AG04449 (cell line): ENCODE measurements at regions of chr9 and their contacts with region 1.

Region 1: DNA sequence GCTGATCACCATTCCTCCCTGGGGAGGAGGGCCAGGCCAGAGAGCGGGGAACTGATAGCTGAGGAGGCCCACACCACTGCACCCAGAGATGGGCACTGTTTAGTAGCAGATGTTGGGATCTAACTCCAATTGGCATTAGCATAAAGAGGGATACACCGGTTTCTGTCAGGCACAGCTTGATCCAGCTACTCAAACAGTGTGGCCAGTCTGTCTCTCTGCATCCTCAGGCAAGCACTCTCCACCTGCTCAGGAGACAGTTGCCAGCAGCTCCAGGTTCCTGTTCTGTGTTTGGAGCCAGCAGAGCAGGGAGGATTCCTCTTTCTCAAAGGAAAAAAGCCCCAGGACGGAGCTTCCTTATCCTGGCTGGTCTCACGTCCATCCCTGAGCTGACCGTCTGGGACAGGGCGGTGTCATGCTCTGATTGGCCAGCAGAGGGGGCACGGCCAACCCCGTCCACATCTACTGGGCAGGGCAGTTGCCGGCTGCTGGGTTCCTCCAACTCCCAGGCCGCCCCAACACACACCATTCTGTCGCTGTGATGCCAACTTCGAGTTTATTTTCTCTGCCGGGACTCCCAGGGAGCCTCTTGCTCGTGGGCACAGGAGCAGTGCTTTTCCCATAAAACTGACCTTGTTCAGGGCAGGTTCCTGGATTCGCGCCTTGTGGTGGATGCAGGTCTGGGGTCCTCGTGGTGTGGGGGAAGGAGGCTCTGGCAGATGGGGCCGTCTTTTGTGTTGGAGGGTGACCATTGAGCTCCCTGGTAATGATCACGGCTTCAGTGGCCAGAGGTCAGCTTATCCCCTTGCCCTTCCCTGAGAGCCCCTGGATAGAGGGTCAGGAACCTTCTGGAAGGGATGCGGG is 47.9 kb downstream of the COL5A1 start:
- DNase-seq: no peak
- H3K4me3 ChIP-seq: no peak overlapping the region
- CTCF ChIP-seq: peak; percentile 93

Region 2: DNA sequence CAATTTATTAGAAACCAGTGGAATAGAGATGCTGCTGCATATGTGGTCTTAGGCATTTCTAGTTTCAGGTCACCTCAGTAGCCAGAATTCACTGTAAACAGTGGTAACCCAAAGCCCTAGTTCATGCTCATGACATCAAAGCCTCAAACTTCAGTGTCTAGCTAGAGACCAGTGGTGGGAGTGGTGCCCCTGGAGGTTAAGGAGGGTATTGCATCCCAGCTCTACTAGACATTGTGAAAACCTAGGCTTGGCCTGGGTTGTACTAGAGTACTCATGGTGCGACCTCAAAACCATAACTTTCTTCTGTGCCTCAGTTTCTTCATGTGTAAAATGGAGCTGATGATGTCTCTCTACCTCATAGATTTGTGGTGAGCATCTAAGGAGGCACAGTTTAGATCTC is 29.1 kb before region 1 on chr9:
- CTCF ChIA-PET with region 1: interaction called, 12 read pairs
- POLR2A ChIA-PET with region 1: interaction called, 8 read pairs
- DNase-seq: no peak
- H3K4me3 ChIP-seq: no peak overlapping the region
- CTCF ChIP-seq: peak; percentile 69

Region 3: DNA sequence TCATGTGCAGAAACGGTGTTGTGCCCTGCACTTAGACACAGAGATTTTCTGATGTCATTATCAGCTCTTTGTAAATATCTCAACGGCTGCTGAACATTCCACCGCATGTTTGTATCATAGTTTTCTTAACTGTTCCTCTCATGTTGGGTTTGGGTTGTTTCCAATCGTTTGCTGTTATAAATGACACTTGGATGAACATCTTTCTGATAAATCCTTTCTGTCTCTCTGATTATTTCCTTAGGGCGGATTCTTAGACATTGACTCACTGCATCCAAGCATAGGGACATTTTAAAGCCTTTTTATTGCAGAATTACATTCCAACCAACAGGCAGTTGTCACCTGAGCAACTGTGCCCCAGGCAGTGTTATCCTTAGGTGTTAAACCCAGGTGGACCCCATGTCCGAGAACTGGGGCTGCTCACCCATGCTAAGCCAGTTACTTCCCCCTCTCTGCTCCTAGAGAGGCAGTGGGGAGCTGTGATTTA is 19.5 kb before region 1 on chr9:
- CTCF ChIA-PET with region 1: interaction called, 27 read pairs
- POLR2A ChIA-PET with region 1: no interaction called
- DNase-seq: peak; percentile 76
- H3K4me3 ChIP-seq: no peak overlapping the region
- CTCF ChIP-seq: no peak

Region 4: DNA sequence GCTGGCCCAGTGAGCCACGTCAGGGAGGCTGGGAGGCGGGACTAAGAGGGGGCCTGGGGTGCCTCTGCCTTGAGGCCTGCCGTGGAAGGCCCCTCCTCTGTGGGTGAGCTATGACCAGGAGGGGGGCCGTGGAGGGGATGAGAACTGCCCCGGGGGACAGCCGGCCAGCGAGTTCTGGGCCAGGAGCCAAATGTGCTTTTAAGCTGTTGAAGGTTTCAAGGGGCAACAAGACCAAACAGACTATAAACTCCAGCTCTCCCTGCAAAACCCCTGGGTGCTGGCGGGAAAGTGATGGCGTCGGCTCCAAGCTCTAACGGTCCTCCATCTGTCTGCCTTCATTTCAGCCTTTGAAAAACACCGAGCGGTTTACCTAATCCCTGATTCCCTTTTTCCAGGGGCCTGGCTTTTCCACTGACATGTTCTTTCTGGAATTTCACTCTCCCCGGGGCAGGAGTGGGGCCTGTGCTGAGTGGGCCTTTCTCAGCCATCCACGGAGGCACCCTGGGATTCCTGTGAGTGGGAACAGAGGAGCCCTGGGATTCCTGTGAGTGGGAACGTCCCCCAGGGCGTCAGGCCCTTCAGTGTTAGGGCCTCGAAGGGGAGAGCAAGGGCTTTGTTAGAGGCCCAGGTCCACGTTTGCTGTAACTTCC is 17.6 kb after region 1 on chr9:
- CTCF ChIA-PET with region 1: interaction called, 16 read pairs
- POLR2A ChIA-PET with region 1: interaction called, 3 read pairs
- DNase-seq: peak; percentile 45
- H3K4me3 ChIP-seq: no peak overlapping the region
- CTCF ChIP-seq: no peak